Activated T-helper 2 cell treated with anti-CD3 and anti-CD28 coated beads, Interferon-gamma antibody, Interleukin-2, Interleukin-4, amounts not matched to agents 10 μg/mL and 5 μg/mL and 100 μg/mL, durations not matched to agents 14 hours and 24 hours and 36 hours (primary cell): ENCODE measurements at regions of chr2 and their contacts with region 1.

Region 1: GRCh38 chr2:105369747-105370690 is 28.8 kb downstream of the FHL2 start:
- DNase-seq: peak; percentile 78
- H3K4me3 Mint-ChIP-seq: no peak overlapping the region
- H3K27ac Mint-ChIP-seq: peak overlapping the region; percentile 31
- H3K4me1 Mint-ChIP-seq: peaks cover 13% of the 10 kb centered on the region
- H3K27me3 Mint-ChIP-seq: peaks cover 2% of the 10 kb centered on the region

Region 2: GRCh38 chr2:105521205-105521604 is 151.2 kb after region 1 on chr2:
- intact Hi-C with region 1: loop called (anchors 1 kb)
- DNase-seq: no peak
- H3K4me3 Mint-ChIP-seq: no peak overlapping the region
- H3K27ac Mint-ChIP-seq: no peak overlapping the region
- H3K4me1 Mint-ChIP-seq: no peaks in the 10 kb centered on the region
- H3K27me3 Mint-ChIP-seq: peaks cover 1% of the 10 kb centered on the region

Region 3: DNA sequence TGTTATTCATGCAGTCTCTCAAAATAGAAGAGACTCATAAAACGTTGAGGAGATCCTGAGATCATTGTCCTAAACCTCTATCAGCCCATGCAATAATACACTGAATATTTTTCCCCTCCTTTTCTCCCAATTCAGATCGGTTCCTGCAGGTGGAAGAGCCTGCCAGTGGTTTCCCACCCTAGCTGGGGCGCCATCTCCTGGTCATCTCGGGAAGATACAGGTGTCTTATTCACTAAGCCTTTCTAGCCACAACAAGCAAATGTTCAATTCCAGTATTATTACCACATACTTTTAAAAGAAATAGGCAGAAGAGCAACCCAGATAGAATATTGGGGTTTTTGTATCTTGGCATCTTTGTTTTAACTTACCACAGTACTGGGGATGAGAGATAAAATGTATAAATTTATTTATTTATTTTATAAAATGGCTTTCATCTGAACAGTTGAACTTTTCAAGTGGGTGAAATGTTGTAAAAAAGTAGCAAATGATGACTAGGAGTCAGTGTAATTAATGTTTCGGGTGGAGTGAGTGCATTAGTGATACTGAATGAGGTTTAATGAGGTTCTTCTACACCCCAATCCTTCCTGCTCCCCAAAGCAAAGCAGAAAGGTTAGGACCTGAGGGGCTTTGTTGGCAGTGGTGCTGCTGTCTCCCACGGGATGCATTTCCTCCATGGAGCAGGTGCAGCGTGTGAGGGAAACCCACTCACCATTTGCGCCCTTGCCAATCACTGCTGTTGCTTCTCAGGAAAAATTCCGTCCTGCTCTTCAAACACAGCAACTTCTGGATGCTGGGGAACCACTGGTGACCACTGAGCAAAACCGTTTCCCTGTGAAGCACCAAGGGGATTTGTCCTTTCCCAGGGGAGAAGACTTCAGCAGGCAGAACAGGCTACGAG is 176.0 kb after region 1 on chr2:
- intact Hi-C with region 1: loop called (anchors 1 kb)
- DNase-seq: peak; percentile 42
- H3K4me3 Mint-ChIP-seq: no peak overlapping the region
- H3K27ac Mint-ChIP-seq: no peak overlapping the region
- H3K4me1 Mint-ChIP-seq: peaks cover 4% of the 10 kb centered on the region
- H3K27me3 Mint-ChIP-seq: peaks cover 14% of the 10 kb centered on the region